ENCODE measurements at regions of chr13 and their contacts with region 1.

Region 1: DNA sequence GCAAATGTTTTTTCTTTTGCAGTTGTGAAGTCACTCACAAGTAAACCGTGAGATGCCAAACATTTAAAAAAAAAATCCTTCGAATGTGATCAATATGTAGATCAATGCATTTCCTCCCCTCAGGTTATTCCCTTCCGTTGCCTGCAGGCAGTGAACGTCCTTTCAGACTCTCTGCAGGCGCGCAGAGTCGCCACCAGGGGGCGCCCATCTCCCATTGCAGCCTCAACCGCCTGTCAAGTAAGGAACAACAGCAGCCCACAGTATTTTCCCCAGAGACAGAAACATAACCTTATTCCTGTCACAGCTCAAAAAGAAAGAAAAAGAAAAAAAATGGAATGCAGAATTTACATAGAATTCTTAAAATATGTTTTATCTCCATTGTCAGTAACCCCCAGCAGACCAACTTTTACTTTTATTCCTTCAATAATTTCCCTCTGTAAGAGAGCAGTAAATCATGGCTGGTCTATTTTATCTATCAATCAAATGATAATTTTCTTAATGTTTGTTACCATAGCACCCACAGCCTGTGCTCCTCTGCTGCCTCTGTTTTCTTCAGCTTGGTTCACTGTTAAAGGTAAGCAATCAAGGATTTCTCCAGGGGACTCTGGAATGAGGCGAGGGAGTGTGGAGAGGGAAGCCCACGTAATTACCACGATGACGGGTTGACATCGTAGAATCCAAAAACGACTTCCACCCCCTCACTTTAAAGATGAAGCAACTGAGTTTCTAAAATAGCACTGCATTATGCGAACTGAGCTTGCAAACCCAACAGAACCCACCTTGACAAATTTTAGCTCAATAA is 637.6 kb upstream of the ARGLU1 start:
- DNase-seq: peak; percentile 71
- H3K4me3 ChIP-seq: peak overlapping the region in 1 of 2 experiments; percentile 10; a peak in 1 of 4 replicates
- H3K27ac ChIP-seq: no peak overlapping the region
- H3K4me1 ChIP-seq: peaks cover 3 to 11% of the 10 kb centered on the region in 2 experiments; a peak in 3 of 4 replicates
- H3K27me3 ChIP-seq: no peaks in the 10 kb centered on the region
- CTCF ChIP-seq: peak; percentile 99
- EP300 ChIP-seq: no peak
- RAD21 ChIP-seq: peak; percentile 90

Region 2: DNA sequence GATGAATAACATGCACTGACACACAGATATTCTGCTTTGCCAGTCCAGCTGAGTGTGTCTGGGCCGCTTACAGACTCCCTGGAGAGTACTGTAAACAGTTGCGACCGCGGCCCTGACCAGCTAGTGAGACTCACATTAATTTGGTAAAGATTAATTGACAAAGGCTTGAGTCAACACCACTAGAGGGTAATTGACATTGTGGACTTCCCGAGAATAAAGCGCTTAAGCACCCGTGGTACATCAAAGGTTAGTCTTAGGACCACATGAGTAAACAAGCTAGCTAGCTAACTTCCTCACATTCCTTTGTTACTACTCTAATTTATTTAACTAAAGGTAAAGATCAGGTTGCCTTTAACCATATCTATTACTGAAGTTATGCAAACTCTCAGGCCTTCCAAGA is 13.2 kb before region 1 on chr13:
- CTCF ChIA-PET with region 1: interaction called, 15 read pairs
- POLR2A ChIA-PET with region 1: no interaction called
- DNase-seq: no peak
- H3K4me3 ChIP-seq: no peak overlapping the region
- H3K27ac ChIP-seq: no peak overlapping the region
- H3K4me1 ChIP-seq: peaks cover 0 to 2% of the 10 kb centered on the region in 2 experiments; a peak in 2 of 4 replicates
- H3K27me3 ChIP-seq: no peaks in the 10 kb centered on the region
- CTCF ChIP-seq: no peak
- EP300 ChIP-seq: no peak
- RAD21 ChIP-seq: no peak

Region 3: DNA sequence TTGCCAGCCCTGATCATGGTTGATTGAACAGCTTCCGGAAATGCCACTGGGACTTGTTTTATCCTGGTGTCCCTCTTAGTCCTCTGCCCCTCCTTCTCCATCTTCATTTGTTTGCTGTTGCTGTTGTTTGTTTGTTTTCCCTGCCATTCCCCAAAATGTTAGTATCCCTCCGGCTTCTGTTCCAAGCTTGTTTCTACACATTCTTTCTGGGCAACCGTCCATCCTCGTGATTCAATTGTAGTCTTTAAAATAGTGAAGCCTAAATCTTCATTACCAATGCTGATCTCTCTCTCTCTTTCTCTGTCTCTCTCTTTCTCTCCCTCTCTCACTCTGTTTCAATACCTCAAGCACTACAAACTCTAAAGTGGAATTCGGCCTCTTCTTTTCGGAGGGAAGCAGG is 11.7 kb after region 1 on chr13:
- CTCF ChIA-PET with region 1: interaction called, 14 read pairs
- POLR2A ChIA-PET with region 1: no interaction called
- DNase-seq: no peak
- H3K4me3 ChIP-seq: no peak overlapping the region
- H3K27ac ChIP-seq: no peak overlapping the region
- H3K4me1 ChIP-seq: peaks cover 0 to 23% of the 10 kb centered on the region in 2 experiments; a peak in 2 of 4 replicates
- H3K27me3 ChIP-seq: no peaks in the 10 kb centered on the region
- CTCF ChIP-seq: no peak
- EP300 ChIP-seq: no peak
- RAD21 ChIP-seq: no peak

Region 4: GRCh38 chr13:107379407-107380155 is 174.1 kb after region 1 on chr13:
- CTCF ChIA-PET with region 1: no interaction called
- POLR2A ChIA-PET with region 1: no interaction called
- DNase-seq: no peak
- H3K4me3 ChIP-seq: no peak overlapping the region
- H3K27ac ChIP-seq: no peak overlapping the region
- H3K4me1 ChIP-seq: peaks cover 21 to 27% of the 10 kb centered on the region in 2 experiments
- H3K27me3 ChIP-seq: no peaks in the 10 kb centered on the region
- CTCF ChIP-seq: no peak
- EP300 ChIP-seq: no peak
- RAD21 ChIP-seq: no peak

Region 5: GRCh38 chr13:107690181-107690580 is 484.7 kb after region 1 on chr13:
- CTCF ChIA-PET with region 1: no interaction called
- POLR2A ChIA-PET with region 1: no interaction called
- DNase-seq: no peak
- H3K4me3 ChIP-seq: no peak overlapping the region
- H3K27ac ChIP-seq: no peak overlapping the region
- H3K4me1 ChIP-seq: peaks cover 0 to 5% of the 10 kb centered on the region in 2 experiments; a peak in 1 of 4 replicates
- H3K27me3 ChIP-seq: no peaks in the 10 kb centered on the region
- CTCF ChIP-seq: no peak
- EP300 ChIP-seq: no peak
- RAD21 ChIP-seq: no peak

Measured in SK-N-SH (cell line).